Activated CD4-positive, alpha-beta T cell treated with anti-CD3 and anti-CD28 coated beads for 36 hours (primary cell): ENCODE measurements at regions of chr18 and their contacts with region 1.

Region 1: GRCh38 chr18:212780-213179 is 54.4 kb downstream of the USP14 start:
- DNase-seq: no peak
- ATAC-seq: no peak
- H3K4me3 Mint-ChIP-seq: no peak overlapping the region
- H3K27ac Mint-ChIP-seq: no peak overlapping the region
- H3K4me1 Mint-ChIP-seq: no peaks in the 10 kb centered on the region
- H3K27me3 Mint-ChIP-seq: no peaks in the 10 kb centered on the region

Region 2: GRCh38 chr18:250688-251422 is 38.1 kb after region 1 on chr18:
- CTCF ChIA-PET with region 1: no interaction called
- POLR2A ChIA-PET with region 1: no interaction called
- intact Hi-C with region 1: loop called in 1 of 2 experiments (anchors 5 kb)
- DNase-seq: no peak
- ATAC-seq: no peak
- H3K4me3 Mint-ChIP-seq: no peak overlapping the region
- H3K27ac Mint-ChIP-seq: no peak overlapping the region
- H3K4me1 Mint-ChIP-seq: no peaks in the 10 kb centered on the region
- H3K27me3 Mint-ChIP-seq: no peaks in the 10 kb centered on the region

Region 3: GRCh38 chr18:261398-262073 is 48.8 kb after region 1 on chr18:
- CTCF ChIA-PET with region 1: no interaction called
- POLR2A ChIA-PET with region 1: no interaction called
- intact Hi-C with region 1: no loop called
- DNase-seq: no peak
- ATAC-seq: no peak
- H3K4me3 Mint-ChIP-seq: no peak overlapping the region
- H3K27ac Mint-ChIP-seq: peak overlapping the region; percentile 67
- H3K4me1 Mint-ChIP-seq: peaks cover 17% of the 10 kb centered on the region
- H3K27me3 Mint-ChIP-seq: no peaks in the 10 kb centered on the region